ENCODE measurements at regions of chr11 and their contacts with region 1.

Region 1: DNA sequence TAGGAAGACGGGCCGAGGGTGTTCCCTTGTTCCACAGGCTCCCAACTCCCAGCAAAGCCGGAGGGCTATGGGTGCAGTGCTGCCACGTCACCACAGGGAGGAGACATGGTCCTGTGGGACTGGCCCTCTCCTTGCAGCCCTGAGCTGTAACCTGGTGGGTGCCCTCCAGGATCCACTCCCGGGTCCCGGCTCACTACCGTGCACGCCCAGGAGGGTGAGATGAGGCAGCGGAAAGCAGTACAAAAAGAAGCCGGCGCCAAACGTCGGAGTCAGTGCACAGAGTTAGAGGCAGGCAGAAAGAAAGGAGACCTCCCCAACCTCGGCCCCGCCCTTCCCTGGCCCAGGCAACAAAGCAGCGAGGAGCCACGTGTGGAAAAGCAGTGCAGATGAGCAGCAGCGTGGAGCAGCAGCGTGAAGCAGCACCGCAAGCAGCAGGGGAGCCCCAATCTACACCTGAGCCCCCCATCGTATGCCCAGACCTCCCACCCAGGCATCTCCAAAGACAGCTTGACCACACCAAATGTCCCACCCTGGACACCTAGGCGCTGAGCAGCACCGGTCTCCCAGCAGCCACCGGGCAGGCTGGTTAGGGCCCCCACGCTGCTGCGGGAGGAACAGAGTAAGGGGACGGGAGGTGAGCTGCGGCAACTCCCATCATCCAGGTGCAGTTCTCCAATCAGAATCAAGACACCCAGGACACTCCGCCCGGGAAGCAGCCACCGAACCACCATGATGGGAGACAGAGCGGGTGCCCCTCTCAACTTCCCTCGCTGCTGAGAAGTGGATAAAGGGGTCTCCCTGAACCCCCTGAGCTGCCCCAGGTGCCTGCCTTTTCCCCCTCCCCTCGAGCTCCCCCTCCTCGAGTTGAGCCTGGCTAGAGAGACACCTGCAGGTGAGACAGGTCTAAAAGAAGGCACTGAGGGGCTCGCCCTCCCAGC is 28.8 kb downstream of the IGSF9B start:
- DNase-seq: peak; percentile 77
- ATAC-seq: peak; percentile 83

Region 2: GRCh38 chr11:134050541-134051383 is 122.8 kb after region 1 on chr11:
- intact Hi-C with region 1: loop called (anchors 10 kb)
- DNase-seq: peak; percentile 82
- ATAC-seq: peak; percentile 76

Region 3: DNA sequence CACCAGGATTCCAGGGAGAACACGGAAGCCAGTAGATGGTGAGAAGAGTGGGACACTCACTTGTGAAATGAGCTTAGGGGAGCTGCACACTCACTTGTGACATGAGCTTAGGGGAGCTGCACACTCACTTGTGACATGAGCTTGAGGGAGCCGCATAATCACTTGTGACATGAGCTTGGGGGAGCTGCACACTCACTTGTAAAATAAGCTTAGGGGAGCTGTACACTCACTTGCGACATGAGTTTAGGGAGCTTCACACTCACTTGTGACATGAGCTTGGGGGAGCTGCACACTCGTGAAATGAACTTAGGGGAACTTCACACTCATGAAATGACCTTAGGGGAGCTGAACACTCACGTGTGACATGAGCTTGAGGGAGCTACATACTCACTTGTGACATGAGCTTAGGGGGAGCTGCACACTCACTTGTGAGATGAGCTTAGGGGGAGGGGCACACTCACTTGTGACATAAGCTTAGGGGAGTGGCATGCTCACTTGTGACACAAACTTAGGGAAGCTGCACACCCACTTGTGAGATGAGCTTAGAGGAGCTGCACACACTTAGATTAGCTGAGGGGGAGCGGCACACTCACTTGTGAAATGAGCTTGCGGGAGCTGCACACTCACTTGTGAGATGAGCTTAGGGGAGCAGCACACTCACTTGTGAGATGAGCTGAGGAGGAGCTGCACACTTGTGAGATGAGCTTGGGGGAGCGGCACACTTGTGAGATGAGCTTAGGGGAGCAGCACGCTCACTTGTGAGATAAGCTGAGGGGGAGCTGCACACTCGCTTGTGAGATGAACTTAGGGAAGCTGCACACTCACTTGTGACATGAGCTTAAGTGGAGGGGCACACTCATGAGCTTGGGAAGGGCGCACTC is 236.8 kb after region 1 on chr11:
- intact Hi-C with region 1: no loop called
- DNase-seq: no peak
- ATAC-seq: no peak

Region 4: DNA sequence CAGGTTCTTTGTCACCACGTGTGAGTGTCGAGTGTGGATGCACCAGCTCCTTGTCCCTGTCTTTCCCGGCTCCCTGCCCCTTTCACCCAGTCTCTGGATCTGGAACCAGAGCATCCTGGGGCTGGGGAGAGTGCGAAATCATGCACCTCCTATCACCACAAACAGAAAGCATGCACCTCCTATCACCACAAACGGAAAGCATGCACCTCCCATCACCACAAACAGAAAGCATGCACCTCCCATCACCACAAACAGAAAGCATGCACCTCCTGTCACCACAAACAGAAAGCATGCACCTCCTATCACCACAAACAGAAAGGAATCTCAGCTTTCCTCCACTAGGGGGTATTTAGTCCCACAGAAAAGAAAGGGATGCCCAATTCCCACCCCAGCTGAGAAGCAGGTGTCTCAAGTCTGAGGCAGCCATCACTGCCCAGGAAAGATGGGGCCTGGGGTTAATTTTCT is 342.3 kb after region 1 on chr11:
- intact Hi-C with region 1: no loop called
- DNase-seq: no peak
- ATAC-seq: no peak

Measured in left ventricle myocardium superior (tissue), 1 donor.